GM12878 (cell line): ENCODE measurements at regions of chr15 and their contacts with region 1.

Region 1: DNA sequence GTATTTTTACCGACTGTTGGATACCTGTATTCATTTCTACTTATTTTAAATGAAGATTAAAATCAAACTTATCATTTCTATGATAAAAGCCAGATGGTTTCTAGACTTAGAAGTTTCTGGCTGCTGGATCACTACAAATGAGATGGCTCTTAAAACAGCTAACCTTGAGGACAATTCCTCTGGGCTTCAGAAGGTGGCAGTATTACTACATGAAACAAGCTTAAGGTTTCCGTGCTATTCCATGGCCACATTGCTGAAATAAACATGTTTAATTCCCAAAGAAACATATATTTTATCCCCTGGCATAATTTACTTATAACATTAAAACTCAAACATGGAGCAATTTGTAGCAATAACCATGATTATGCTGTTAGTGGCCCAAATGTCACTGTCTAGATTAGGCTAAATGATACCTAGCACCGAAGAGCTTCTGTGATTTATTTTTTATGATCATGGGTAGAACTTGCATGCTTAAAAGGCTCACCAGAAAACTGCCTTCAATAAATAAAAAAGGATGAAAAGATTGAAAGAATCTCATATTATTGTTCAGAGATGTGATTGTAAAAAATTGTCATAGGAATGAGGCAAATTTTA is 204.0 kb upstream of the NANOGP8 start:
- DNase-seq: no peak
- ATAC-seq: peak; percentile 75
- H3K4me3 ChIP-seq: no peak overlapping the region
- H3K27ac ChIP-seq: no peak overlapping the region
- H3K4me1 ChIP-seq: no peaks in the 10 kb centered on the region
- H3K27me3 ChIP-seq: no peaks in the 10 kb centered on the region
- CTCF ChIP-seq: peak; percentile 70 to 77 (median 71)
- EP300 ChIP-seq: no peak
- POLR2A ChIP-seq: no peak
- RAD21 ChIP-seq: peak; percentile 88

Region 2: DNA sequence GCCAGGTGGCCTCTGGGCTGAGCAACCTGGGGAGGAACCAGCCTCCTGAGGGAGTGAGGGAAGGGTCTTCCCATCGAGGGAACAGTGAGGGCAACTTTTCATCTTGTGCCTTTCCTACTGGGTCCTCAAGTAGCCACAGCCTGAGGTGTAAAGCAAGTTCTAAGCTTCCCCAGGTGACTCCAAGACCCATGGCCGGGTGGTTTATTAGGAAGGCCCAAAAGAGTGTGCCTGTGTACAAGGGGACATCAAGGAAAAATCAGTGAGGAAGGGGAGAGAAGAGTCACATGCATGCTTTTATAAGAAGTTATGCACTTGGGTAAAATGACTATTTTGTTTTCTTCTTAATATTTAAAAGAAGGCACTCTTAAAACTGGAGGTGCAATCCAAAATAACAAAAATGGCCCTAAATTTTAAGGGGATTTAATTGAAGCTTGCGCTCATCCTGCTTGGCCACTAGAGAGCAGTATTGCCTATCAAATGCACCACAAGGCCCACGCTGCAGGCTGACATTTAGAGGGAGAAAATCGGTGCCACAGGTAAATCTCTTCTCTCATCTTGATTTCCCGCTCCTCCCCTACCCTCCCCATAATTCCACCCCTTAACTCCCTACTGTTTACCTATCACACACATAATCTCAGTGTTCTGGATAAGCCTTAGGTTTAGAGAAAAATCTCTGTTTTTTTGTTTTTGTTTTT is 210.8 kb before region 1 on chr15:
- CTCF ChIA-PET with region 1: interaction called, 38 read pairs
- POLR2A ChIA-PET with region 1: no interaction called
- RAD21 ChIA-PET with region 1: interaction called, 11 read pairs
- SMC1A ChIA-PET with region 1: interaction called, 10 read pairs
- in situ Hi-C with region 1: no loop called
- intact Hi-C with region 1: loop called (anchors 2 kb)
- DNase-seq: no peak
- ATAC-seq: peak; percentile 75
- H3K4me3 ChIP-seq: no peak overlapping the region
- H3K27ac ChIP-seq: no peak overlapping the region
- H3K4me1 ChIP-seq: no peaks in the 10 kb centered on the region
- H3K27me3 ChIP-seq: no peaks in the 10 kb centered on the region
- CTCF ChIP-seq: peak; percentile 78 to 89 (median 82)
- EP300 ChIP-seq: no peak
- POLR2A ChIP-seq: no peak
- RAD21 ChIP-seq: peak; percentile 98

Region 3: DNA sequence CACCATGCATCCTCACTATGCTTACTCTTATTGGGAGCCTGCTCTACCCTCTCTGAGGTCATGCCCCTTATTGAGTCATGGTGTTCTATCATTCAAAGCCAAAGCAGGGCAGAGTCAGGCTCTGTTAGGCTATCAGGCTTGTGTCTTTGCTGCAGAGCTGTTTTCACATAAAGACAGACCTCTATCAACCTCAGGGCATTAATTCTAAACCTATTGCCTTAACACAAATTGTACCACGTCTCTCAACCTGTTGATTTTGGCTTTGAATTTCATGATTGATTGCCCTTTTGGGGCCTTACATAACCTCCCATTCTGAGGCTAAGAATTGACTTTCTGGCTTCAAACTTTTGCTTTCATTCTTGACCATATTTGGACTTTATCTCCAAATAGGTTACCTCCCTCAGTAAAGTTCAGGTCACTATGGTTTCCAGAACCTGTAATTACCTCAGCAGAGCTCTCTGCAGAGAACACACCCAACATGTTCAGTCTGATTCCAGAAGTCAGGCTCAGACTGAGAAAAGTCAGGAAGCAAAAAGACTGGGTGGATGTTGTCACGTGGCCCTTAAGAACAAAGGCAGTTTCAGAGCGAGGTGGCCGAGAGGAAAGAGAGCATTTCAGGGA is 17.4 kb after region 1 on chr15:
- CTCF ChIA-PET with region 1: interaction called, 13 read pairs
- POLR2A ChIA-PET with region 1: no interaction called
- RAD21 ChIA-PET with region 1: interaction called, 5 read pairs
- SMC1A ChIA-PET with region 1: interaction called, 3 read pairs
- in situ Hi-C with region 1: no loop called
- intact Hi-C with region 1: no loop called
- DNase-seq: no peak
- ATAC-seq: peak; percentile 83
- H3K4me3 ChIP-seq: no peak overlapping the region
- H3K27ac ChIP-seq: no peak overlapping the region; the same call in 1 of the 2 replicates
- H3K4me1 ChIP-seq: peaks cover 4% of the 10 kb centered on the region
- H3K27me3 ChIP-seq: no peaks in the 10 kb centered on the region
- CTCF ChIP-seq: no peak
- EP300 ChIP-seq: no peak
- POLR2A ChIP-seq: no peak
- RAD21 ChIP-seq: no peak

Region 4: DNA sequence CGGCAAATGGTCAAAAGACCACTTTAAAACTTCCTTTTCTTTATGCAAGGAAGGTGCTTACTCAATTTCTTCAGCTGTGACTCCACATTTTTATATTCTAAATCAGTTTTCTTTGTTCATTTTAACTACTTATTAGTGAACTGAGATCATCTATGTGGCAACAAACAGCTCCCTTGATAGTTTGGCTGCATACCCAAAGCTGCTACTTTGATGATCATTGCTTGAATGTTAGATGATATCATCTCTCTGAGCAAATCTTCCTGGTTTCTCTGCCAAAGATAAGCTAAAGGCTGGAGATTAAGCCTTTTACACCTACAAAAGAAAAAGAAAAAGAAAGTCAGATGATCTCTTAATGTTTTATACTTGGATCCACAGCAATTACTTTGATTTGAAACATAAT is 161.4 kb after region 1 on chr15:
- CTCF ChIA-PET with region 1: interaction called, 199 read pairs
- POLR2A ChIA-PET with region 1: no interaction called
- RAD21 ChIA-PET with region 1: interaction called, 100 read pairs
- SMC1A ChIA-PET with region 1: interaction called, 108 read pairs
- in situ Hi-C with region 1: loop called (anchors 5 kb)
- intact Hi-C with region 1: no loop called
- DNase-seq: no peak
- ATAC-seq: no peak
- H3K4me3 ChIP-seq: no peak overlapping the region
- H3K27ac ChIP-seq: no peak overlapping the region
- H3K4me1 ChIP-seq: no peaks in the 10 kb centered on the region
- H3K27me3 ChIP-seq: no peaks in the 10 kb centered on the region
- CTCF ChIP-seq: no peak
- EP300 ChIP-seq: no peak
- POLR2A ChIP-seq: no peak
- RAD21 ChIP-seq: no peak

Region 5: GRCh38 chr15:35519541-35520149 is 230.5 kb after region 1 on chr15:
- CTCF ChIA-PET with region 1: interaction called, 6 read pairs
- POLR2A ChIA-PET with region 1: no interaction called
- RAD21 ChIA-PET with region 1: interaction called, 6 read pairs
- SMC1A ChIA-PET with region 1: interaction called, 4 read pairs
- in situ Hi-C with region 1: no loop called
- intact Hi-C with region 1: loop called (anchors 5 kb)
- DNase-seq: peak; percentile 19
- ATAC-seq: peak; percentile 79
- H3K4me3 ChIP-seq: no peak overlapping the region
- H3K27ac ChIP-seq: no peak overlapping the region
- H3K4me1 ChIP-seq: no peaks in the 10 kb centered on the region
- H3K27me3 ChIP-seq: no peaks in the 10 kb centered on the region
- CTCF ChIP-seq: peak; percentile 41 to 71 (median 62); a peak in 5 of 6 replicates
- EP300 ChIP-seq: no peak
- POLR2A ChIP-seq: no peak
- RAD21 ChIP-seq: peak; percentile 88

Region 6: GRCh38 chr15:36254426-36254825 is 965.3 kb after region 1 on chr15:
- CTCF ChIA-PET with region 1: no interaction called
- POLR2A ChIA-PET with region 1: interaction called, 11 read pairs
- RAD21 ChIA-PET with region 1: no interaction called
- SMC1A ChIA-PET with region 1: no interaction called
- in situ Hi-C with region 1: no loop called
- intact Hi-C with region 1: no loop called
- DNase-seq: no peak
- ATAC-seq: no peak
- H3K4me3 ChIP-seq: no peak overlapping the region
- H3K27ac ChIP-seq: no peak overlapping the region
- H3K4me1 ChIP-seq: no peaks in the 10 kb centered on the region
- H3K27me3 ChIP-seq: no peaks in the 10 kb centered on the region
- CTCF ChIP-seq: no peak
- EP300 ChIP-seq: no peak
- POLR2A ChIP-seq: no peak
- RAD21 ChIP-seq: no peak